ENCODE measurements at regions of chr17 and their contacts with region 1.

Region 1: DNA sequence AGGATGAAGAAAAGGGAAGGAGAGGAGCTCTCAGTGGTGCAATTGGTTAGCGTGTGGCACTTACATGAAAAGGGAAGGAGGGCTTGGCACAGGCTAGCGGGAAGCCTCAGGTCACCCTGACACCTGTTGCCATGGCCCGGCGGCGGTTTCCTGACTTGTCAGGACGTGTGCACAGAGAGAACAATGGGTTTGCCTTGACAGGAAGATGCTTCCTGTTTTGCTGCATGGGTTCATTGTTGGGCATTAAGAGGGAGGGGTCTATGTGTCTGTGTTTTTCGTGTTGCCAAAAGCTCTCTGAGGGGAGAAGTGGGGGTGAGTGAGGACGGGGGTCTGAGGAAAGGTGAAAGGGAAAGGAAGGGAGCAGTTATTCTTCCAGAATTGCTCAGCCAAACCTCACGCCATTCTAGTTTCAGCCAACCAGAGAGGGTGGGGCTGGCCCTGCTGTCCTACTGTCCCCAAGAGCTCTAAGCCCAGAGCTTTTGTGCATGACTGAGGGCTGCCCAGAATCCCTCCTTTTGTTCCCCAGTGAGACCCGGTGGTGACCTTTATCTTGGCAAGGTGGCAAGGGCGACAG is 17.1 kb upstream of the CCR7 start:
- DNase-seq: peak; percentile 83
- ATAC-seq: peak; percentile 83
- H3K4me3 Mint-ChIP-seq: peak overlapping the region; percentile 56
- H3K27ac Mint-ChIP-seq: peak overlapping the region; percentile 88
- H3K4me1 Mint-ChIP-seq: peaks cover 92% of the 10 kb centered on the region
- H3K27me3 Mint-ChIP-seq: no peaks in the 10 kb centered on the region

Region 2: GRCh38 chr17:40564883-40565768 is 17.3 kb before region 1 on chr17 and contains the start of gene CCR7:
- CTCF ChIA-PET with region 1: interaction called, 29 read pairs
- POLR2A ChIA-PET with region 1: interaction called, 68 read pairs
- DNase-seq: peak; percentile 92
- ATAC-seq: peak; percentile 45
- H3K4me3 Mint-ChIP-seq: peak within 1 kb of the TSS; percentile 86
- H3K27ac Mint-ChIP-seq: peak within 1 kb of the TSS; percentile 93
- H3K4me1 Mint-ChIP-seq: peaks cover 64% of the 10 kb centered on the region
- H3K27me3 Mint-ChIP-seq: no peaks in the 10 kb centered on the region
- total RNA-seq, gene CCR7: 171 to 173 TPM

Region 3: GRCh38 chr17:40598663-40599467 is 16.4 kb after region 1 on chr17:
- CTCF ChIA-PET with region 1: interaction called, 17 read pairs
- POLR2A ChIA-PET with region 1: interaction called, 12 read pairs
- DNase-seq: peak; percentile 67
- ATAC-seq: peak; percentile 35
- H3K4me3 Mint-ChIP-seq: peak overlapping the region; percentile 69
- H3K27ac Mint-ChIP-seq: peak overlapping the region; percentile 95
- H3K4me1 Mint-ChIP-seq: peaks cover 94% of the 10 kb centered on the region
- H3K27me3 Mint-ChIP-seq: no peaks in the 10 kb centered on the region

Region 4: GRCh38 chr17:40722241-40722640 is 139.8 kb after region 1 on chr17:
- CTCF ChIA-PET with region 1: no interaction called
- POLR2A ChIA-PET with region 1: no interaction called
- DNase-seq: no peak
- ATAC-seq: no peak
- H3K4me3 Mint-ChIP-seq: no peak overlapping the region
- H3K27ac Mint-ChIP-seq: no peak overlapping the region
- H3K4me1 Mint-ChIP-seq: no peaks in the 10 kb centered on the region
- H3K27me3 Mint-ChIP-seq: peaks cover 21% of the 10 kb centered on the region

Region 5: GRCh38 chr17:40836020-40836419 is 253.6 kb after region 1 on chr17:
- CTCF ChIA-PET with region 1: no interaction called
- POLR2A ChIA-PET with region 1: no interaction called
- DNase-seq: no peak
- ATAC-seq: no peak
- H3K4me3 Mint-ChIP-seq: no peak overlapping the region
- H3K27ac Mint-ChIP-seq: no peak overlapping the region
- H3K4me1 Mint-ChIP-seq: peaks cover 5% of the 10 kb centered on the region
- H3K27me3 Mint-ChIP-seq: peaks cover 4% of the 10 kb centered on the region

Region 6: DNA sequence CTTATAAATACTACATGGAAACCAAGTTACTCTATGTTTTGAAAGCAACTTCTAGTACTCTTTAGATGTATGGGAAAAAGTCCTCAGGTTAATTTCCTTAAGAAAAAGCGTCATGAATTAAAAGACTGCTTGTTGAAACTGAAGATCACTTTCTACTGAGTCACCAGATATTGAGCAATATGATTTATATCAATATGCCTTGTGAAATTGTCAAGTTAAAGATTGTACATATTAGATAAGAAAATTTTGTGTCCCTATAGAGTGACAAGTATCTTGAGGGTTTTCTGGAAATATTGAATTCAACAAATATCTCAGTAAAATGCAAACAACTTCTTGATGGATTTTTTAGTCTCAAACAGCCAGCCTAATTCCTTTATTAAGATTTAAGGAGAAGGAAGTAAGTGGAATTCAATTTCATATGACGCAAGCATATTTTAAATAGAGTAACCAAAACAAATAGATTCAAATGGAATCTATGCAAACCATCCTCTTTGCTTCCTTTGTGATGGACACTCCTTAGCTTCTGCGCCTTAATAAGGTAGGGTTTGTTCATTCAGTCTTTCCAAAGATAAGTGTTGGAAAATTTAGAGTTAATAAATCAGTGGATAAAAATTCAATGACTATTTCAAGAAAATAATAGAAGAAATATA is 268.0 kb after region 1 on chr17:
- CTCF ChIA-PET with region 1: no interaction called
- POLR2A ChIA-PET with region 1: no interaction called
- DNase-seq: no peak
- ATAC-seq: no peak
- H3K4me3 Mint-ChIP-seq: no peak overlapping the region
- H3K27ac Mint-ChIP-seq: no peak overlapping the region
- H3K4me1 Mint-ChIP-seq: no peaks in the 10 kb centered on the region
- H3K27me3 Mint-ChIP-seq: peaks cover 34% of the 10 kb centered on the region